Activated CD4-positive, alpha-beta T cell treated with anti-CD3 and anti-CD28 coated beads for 36 hours (primary cell): ENCODE measurements at regions of chr2 and their contacts with region 1.

Region 1: DNA sequence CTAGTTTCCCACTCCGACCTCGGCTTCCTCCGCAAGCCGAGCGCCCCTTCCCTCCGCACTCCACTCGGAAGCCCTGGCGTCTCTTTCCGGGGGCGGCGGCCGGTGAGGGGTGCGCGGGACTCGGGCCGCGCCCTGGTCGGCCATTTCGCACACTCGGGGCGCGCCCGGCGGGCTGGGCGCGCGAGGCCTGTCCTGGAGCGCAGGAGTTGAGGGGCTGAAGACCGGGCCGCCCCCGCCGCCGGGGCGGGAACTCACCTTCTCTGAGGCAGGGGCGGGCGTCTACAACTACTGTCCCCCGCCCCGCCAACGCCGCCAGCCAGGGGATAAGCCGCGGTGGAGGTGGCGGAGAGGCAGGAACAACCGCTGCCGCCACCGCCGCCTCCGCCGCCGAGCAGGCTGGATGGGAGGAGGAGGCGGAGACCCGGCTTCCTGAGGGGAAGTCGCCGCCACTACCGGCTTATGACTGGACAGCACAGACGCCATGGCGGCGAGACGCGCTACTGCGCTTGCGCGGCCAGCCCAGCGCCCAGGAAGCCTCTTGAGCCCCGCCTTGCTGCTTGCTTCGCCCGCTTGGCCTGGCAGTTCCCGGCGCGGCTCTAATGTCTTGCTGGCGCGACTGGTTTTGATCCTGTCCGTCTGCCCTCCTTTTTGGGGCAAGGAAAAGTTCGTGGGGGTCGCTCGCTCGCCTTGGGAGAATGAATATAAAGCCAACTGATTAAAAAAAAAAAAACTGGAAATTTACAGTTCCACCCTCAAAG is at the start of gene KRCC1:
- DNase-seq: peak; percentile 96
- ATAC-seq: peak; percentile 93
- H3K4me3 Mint-ChIP-seq: peak within 1 kb of the TSS; percentile 92
- H3K27ac Mint-ChIP-seq: peak within 1 kb of the TSS; percentile 99
- H3K4me1 Mint-ChIP-seq: peaks cover 58% of the 10 kb centered on the region
- H3K27me3 Mint-ChIP-seq: no peaks in the 10 kb centered on the region
- total RNA-seq, gene KRCC1: 11.5 to 12.9 TPM

Region 2: GRCh38 chr2:88038263-88039105 is 17.1 kb before region 1 on chr2:
- CTCF ChIA-PET with region 1: interaction called, 11 read pairs
- POLR2A ChIA-PET with region 1: no interaction called
- intact Hi-C with region 1: loop called (anchors 1 to 2 kb)
- DNase-seq: no peak
- ATAC-seq: peak; percentile 91
- H3K4me3 Mint-ChIP-seq: no peak overlapping the region
- H3K27ac Mint-ChIP-seq: peak overlapping the region; percentile 53
- H3K4me1 Mint-ChIP-seq: peaks cover 38% of the 10 kb centered on the region
- H3K27me3 Mint-ChIP-seq: no peaks in the 10 kb centered on the region

Region 3: GRCh38 chr2:88159955-88160415 is 104.4 kb after region 1 on chr2:
- CTCF ChIA-PET with region 1: interaction called, 78 read pairs
- POLR2A ChIA-PET with region 1: interaction called, 4 read pairs
- intact Hi-C with region 1: loop called (anchors 1 to 2 kb)
- DNase-seq: peak; percentile 67
- ATAC-seq: peak; percentile 58
- H3K4me3 Mint-ChIP-seq: no peak overlapping the region
- H3K27ac Mint-ChIP-seq: no peak overlapping the region
- H3K4me1 Mint-ChIP-seq: no peaks in the 10 kb centered on the region
- H3K27me3 Mint-ChIP-seq: peaks cover 3% of the 10 kb centered on the region

Region 4: DNA sequence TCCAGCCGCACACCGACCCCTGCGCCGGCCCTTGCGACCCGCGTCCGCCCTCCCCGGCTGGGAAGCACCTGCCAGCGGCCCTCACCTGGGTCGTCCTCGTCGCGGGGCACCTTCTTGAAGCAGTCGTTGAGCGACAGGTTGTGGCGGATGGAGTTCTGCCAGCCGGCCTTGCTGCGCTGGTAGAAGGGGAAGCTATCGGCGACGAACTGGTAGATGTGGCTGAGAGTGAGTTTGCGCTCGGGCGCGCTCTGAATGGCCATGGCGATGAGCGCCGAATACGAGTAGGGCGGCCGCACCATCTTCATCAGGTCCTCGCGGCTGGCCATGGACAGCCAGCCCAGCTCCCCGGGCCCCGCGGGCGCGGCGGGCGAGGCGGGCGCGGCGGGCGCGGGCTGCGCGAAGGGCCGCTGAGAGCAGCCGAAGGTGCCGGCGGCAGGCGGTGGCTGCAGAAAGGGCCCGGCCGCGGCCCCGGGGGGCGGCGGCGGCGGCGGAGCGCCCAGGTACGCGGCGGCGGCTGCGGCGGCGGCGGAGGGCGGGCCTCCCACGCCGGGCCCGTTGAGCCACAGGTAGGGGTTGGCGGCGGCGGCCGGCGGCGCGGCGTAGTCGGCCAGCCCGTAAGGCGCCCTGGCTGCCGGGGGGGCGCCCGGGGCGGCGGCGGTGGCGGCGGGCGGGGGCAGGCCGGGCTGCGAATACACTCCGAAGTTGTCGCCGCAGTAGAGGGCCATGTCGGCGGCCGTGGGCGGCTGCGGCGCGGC is 396.4 kb after region 1 on chr2:
- CTCF ChIA-PET with region 1: no interaction called
- POLR2A ChIA-PET with region 1: no interaction called
- intact Hi-C with region 1: loop called (anchors 5 to 10 kb)
- DNase-seq: peak; percentile 30
- ATAC-seq: peak; percentile 19
- H3K4me3 Mint-ChIP-seq: peak overlapping the region; percentile 49
- H3K27ac Mint-ChIP-seq: no peak overlapping the region
- H3K4me1 Mint-ChIP-seq: peaks cover 8% of the 10 kb centered on the region
- H3K27me3 Mint-ChIP-seq: peaks cover 56% of the 10 kb centered on the region